Prostate gland (tissue), 2 donors: ENCODE measurements at regions of chr1 and their contacts with region 1.

Region 1: GRCh38 chr1:47710329-47711071 is 272.7 kb downstream of the FOXD2 start:
- DNase-seq: peak; percentile 63
- H3K4me3 ChIP-seq: peak overlapping the region in 1 of 2 donors; percentile 22
- H3K27ac ChIP-seq: peak overlapping the region in 1 of 2 donors; percentile 38
- H3K4me1 ChIP-seq: peaks cover 9% of the 10 kb centered on the region
- H3K27me3 ChIP-seq: peaks cover 16% of the 10 kb centered on the region
- CTCF ChIP-seq: peak; percentile 90 to 98 (median 96)
- POLR2A ChIP-seq: no peak

Region 2: GRCh38 chr1:47437447-47438164 is 272.9 kb before region 1 on chr1 and contains the start of gene FOXD2:
- intact Hi-C with region 1: loop called (anchors 2 kb)
- DNase-seq: peak; percentile 66
- H3K4me3 ChIP-seq: peak within 1 kb of the TSS; percentile 47 to 57
- H3K27ac ChIP-seq: peak within 1 kb of the TSS; percentile 80 to 86
- H3K4me1 ChIP-seq: no peaks in the 10 kb centered on the region
- H3K27me3 ChIP-seq: peaks cover 35% of the 10 kb centered on the region
- CTCF ChIP-seq: peak; percentile 98 to 99 (median 98)
- POLR2A ChIP-seq: peak; percentile 19
- total RNA-seq, gene FOXD2: 1.2 to 1.8 TPM

Region 3: GRCh38 chr1:47532921-47533792 is 177.3 kb before region 1 on chr1:
- intact Hi-C with region 1: loop called (anchors 5 kb)
- DNase-seq: peak; percentile 25
- H3K4me3 ChIP-seq: peak overlapping the region; percentile 19 to 22
- H3K27ac ChIP-seq: peak overlapping the region in 1 of 2 donors; percentile 55
- H3K4me1 ChIP-seq: peaks cover 12% of the 10 kb centered on the region
- H3K27me3 ChIP-seq: peaks cover 6% of the 10 kb centered on the region
- CTCF ChIP-seq: no peak
- POLR2A ChIP-seq: no peak